GM12878 (cell line): ENCODE measurements at regions of chr17 and their contacts with region 1.

Region 1: GRCh38 chr17:32783602-32784001 is 93.3 kb downstream of the MYO1D start:
- DNase-seq: peak; percentile 32
- ATAC-seq: peak; percentile 82
- H3K4me3 ChIP-seq: no peak overlapping the region
- H3K27ac ChIP-seq: no peak overlapping the region
- H3K4me1 ChIP-seq: peaks cover 3% of the 10 kb centered on the region
- H3K27me3 ChIP-seq: no peaks in the 10 kb centered on the region
- CTCF ChIP-seq: peak; percentile 41 to 80 (median 60); a peak in 5 of 6 replicates
- EP300 ChIP-seq: no peak
- POLR2A ChIP-seq: no peak
- RAD21 ChIP-seq: peak; percentile 88

Region 2: DNA sequence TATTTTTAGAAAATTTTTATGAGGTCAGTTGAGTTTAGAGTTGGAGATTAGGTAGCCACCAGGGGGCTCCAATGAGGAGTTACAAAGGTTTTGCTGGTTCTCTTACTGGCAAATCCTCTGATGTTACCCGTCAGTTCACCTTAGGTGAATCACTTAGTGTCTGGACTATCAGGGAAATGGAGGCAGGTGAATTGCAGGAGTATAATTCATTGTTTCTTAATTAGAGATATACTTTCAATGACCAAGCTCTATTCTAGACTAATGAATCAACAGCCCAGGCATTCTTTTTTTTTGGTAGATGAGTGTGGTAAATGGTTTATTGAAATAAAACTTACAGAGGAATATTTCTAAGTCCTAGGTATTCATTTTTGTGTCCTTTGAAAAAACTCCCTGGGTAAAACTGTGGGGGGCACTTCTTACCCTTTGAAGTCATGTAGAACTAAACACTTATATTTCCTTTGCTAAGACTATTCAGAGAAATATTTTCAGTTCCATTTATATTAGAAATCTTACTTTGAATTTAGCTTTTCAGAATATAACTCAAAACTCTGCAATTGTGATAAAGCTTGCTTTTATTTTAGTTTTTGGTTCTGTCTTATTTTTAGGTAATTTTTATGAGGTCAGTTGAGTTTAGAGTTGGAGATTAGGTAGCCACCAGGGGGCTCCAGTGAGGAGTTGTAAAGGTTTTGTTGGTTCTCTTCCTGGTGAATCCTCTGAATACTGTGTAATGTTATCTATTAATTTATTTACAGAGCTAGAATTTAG is 321.6 kb before region 1 on chr17:
- CTCF ChIA-PET with region 1: interaction called, 10 read pairs
- POLR2A ChIA-PET with region 1: no interaction called
- RAD21 ChIA-PET with region 1: no interaction called
- SMC1A ChIA-PET with region 1: interaction called, 4 read pairs
- in situ Hi-C with region 1: no loop called
- intact Hi-C with region 1: no loop called
- DNase-seq: no peak
- ATAC-seq: peak; percentile 93
- H3K4me3 ChIP-seq: no peak overlapping the region
- H3K27ac ChIP-seq: no peak overlapping the region
- H3K4me1 ChIP-seq: no peaks in the 10 kb centered on the region
- H3K27me3 ChIP-seq: no peaks in the 10 kb centered on the region
- CTCF ChIP-seq: peak; percentile 35 to 64 (median 59); a peak in 5 of 6 replicates
- EP300 ChIP-seq: no peak
- POLR2A ChIP-seq: no peak
- RAD21 ChIP-seq: peak; percentile 42

Region 3: DNA sequence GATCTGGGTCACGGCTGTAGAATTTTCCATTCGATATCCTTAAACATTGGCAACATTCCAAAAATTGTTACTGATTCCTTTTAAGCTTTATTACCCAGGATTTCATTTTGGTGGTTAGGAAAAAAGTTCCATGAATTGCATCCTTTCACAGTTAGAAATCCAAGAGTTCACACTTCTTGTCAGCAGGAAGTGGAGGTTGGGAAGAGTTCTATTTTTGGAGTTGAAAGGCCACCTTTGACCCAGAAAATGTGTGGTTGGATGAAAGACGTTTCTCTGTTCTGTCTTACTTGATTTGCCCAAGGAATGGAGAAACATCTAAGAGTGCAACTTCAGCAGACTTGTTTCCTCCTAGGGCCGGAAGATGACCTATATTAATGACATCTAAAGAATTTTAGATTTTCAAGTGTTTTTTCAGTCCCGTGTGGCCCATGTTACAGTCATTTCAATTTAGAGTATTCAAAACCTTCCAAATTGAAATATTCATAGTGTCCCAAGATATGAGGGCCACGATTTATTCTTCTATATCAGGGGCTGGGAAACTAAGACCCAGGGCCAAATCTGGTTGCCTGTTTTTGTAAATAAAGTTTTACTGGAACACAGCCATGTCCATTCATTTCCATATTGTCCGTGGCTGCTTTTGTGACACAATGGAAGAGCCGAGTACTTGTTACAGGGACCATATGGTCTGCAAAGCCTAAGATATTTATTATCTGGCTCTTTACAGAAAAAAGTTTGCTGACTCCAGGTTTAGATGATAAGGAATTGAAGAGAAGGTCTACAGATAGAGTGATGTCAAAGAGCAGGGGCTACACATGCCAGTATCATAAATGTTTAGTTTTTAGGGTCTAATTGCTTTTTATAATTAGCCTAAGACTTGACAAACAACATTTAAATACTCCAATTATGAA is 246.6 kb before region 1 on chr17:
- CTCF ChIA-PET with region 1: no interaction called
- POLR2A ChIA-PET with region 1: no interaction called
- RAD21 ChIA-PET with region 1: no interaction called
- SMC1A ChIA-PET with region 1: no interaction called
- in situ Hi-C with region 1: no loop called
- intact Hi-C with region 1: no loop called
- DNase-seq: no peak
- ATAC-seq: no peak
- H3K4me3 ChIP-seq: no peak overlapping the region
- H3K27ac ChIP-seq: no peak overlapping the region
- H3K4me1 ChIP-seq: no peaks in the 10 kb centered on the region
- H3K27me3 ChIP-seq: no peaks in the 10 kb centered on the region
- CTCF ChIP-seq: no peak
- EP300 ChIP-seq: no peak
- POLR2A ChIP-seq: no peak
- RAD21 ChIP-seq: no peak

Region 4: DNA sequence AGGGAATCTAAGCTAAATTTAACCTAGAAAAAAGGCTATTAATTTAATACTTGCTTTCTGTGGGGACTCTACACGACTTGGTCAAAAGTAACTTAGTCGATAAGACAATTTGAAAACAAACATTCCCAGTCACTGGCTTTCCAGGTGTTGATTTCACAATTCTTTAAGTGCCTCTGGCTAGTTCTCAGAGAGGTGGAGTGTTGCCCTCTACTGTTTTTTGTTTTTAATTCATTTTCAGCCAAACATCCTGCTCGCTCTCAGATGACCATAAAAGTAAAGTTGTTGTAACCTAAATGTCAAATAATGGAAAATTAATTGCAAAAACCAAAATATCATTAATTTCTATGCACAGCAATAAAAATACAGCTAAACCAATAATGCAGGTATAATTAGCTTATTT is 13.8 kb before region 1 on chr17:
- CTCF ChIA-PET with region 1: interaction called, 24 read pairs
- POLR2A ChIA-PET with region 1: interaction called, 3 read pairs
- RAD21 ChIA-PET with region 1: interaction called, 9 read pairs
- SMC1A ChIA-PET with region 1: interaction called, 12 read pairs
- in situ Hi-C with region 1: no loop called
- intact Hi-C with region 1: no loop called
- DNase-seq: no peak
- ATAC-seq: no peak
- H3K4me3 ChIP-seq: no peak overlapping the region
- H3K27ac ChIP-seq: no peak overlapping the region
- H3K4me1 ChIP-seq: no peaks in the 10 kb centered on the region
- H3K27me3 ChIP-seq: no peaks in the 10 kb centered on the region
- CTCF ChIP-seq: 0 out of 6 replicates have a peak, but pooled peaks of 1 of the 3 experiments have one; percentile 12
- EP300 ChIP-seq: no peak
- POLR2A ChIP-seq: no peak
- RAD21 ChIP-seq: 0 out of 2 replicates have a peak, but pooled peaks have one; percentile 5

Region 5: DNA sequence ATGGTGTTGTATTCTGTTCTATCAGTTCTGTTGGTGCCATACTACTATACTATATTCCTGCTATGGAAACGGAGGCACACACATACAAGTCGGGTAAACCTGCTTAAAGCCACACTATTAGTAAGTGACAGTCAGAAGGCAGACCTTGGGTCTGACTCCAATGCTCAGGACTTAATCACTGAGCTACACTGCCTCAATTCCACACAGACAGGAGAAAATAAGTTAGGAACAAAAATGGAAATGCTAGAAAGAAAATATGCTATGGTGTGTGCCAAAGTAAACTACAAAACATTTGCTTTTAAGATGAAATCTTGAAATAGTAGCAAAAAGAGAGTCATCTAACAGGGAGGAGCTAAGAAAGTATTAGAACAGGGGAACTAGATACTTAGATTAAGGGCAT is 45.2 kb after region 1 on chr17:
- CTCF ChIA-PET with region 1: interaction called, 15 read pairs
- POLR2A ChIA-PET with region 1: interaction called, 9 read pairs
- RAD21 ChIA-PET with region 1: interaction called, 5 read pairs
- SMC1A ChIA-PET with region 1: interaction called, 17 read pairs
- in situ Hi-C with region 1: no loop called
- intact Hi-C with region 1: loop called (anchors 5 kb)
- DNase-seq: no peak
- ATAC-seq: peak; percentile 16
- H3K4me3 ChIP-seq: peak overlapping the region; percentile 35
- H3K27ac ChIP-seq: peak overlapping the region; percentile 88
- H3K4me1 ChIP-seq: peaks cover 48% of the 10 kb centered on the region
- H3K27me3 ChIP-seq: no peaks in the 10 kb centered on the region
- CTCF ChIP-seq: no peak
- EP300 ChIP-seq: no peak
- POLR2A ChIP-seq: no peak
- RAD21 ChIP-seq: no peak

Region 6: DNA sequence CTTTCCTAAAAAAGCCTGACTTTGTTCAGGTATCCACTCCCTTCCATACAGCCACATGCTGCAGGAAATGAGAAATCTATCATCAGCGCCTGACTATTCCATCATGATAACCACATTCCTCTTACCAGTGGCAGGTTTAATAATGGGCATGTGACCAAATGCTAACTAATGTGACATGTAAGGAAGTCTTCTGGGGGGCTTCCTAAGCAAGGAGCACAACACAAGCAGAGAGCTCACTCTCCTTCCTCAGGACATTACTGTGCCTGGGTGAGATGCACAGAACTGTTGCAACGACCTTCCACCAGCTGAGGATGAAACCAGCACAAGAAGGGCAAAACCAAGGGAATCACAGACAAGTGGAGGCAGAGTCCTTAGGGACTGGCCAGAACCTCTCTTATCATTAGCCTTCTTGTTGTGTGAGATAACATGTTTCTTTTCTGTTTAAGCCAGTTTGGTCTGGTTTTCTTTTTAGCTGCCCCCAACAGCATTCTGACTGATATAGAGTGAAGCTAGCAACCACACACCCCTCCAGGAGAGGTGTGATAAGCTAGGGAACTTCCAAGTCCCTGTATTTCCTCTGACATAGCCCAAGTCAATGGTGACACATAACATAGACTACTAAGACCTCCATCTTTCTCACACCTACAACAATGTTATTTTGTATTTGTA is 76.4 kb after region 1 on chr17:
- CTCF ChIA-PET with region 1: interaction called, 11 read pairs
- POLR2A ChIA-PET with region 1: no interaction called
- RAD21 ChIA-PET with region 1: interaction called, 8 read pairs
- SMC1A ChIA-PET with region 1: interaction called, 17 read pairs
- in situ Hi-C with region 1: no loop called
- intact Hi-C with region 1: no loop called
- DNase-seq: no peak
- ATAC-seq: peak; percentile 97
- H3K4me3 ChIP-seq: no peak overlapping the region
- H3K27ac ChIP-seq: no peak overlapping the region
- H3K4me1 ChIP-seq: peaks cover 6% of the 10 kb centered on the region; the same call in 1 of the 2 replicates
- H3K27me3 ChIP-seq: no peaks in the 10 kb centered on the region
- CTCF ChIP-seq: no peak
- EP300 ChIP-seq: no peak
- POLR2A ChIP-seq: no peak
- RAD21 ChIP-seq: no peak

Region 7: DNA sequence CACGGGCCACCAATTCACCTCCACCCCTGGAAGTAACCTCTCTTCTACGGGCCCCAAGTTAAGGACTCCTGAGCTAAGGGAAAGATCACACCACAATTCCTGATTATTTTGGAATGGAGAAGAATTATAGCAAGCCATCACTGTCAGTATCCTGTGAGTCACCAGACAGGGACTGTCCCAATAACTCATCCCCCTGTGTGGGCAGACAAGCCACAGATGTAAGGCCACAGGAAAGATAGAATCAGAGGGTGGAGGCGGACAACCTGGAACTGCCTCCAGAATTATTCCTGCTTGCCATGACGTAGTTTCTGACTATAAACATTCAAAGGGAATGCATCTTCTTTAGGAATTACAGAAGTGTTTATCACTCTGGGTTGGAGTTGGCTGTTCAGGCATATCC is 99.1 kb after region 1 on chr17:
- CTCF ChIA-PET with region 1: interaction called, 335 read pairs
- POLR2A ChIA-PET with region 1: interaction called, 29 read pairs
- RAD21 ChIA-PET with region 1: interaction called, 183 read pairs
- SMC1A ChIA-PET with region 1: interaction called, 248 read pairs
- in situ Hi-C with region 1: loop called (anchors 5 kb)
- intact Hi-C with region 1: loop called (anchors 1 kb)
- DNase-seq: no peak
- ATAC-seq: peak; percentile 72
- H3K4me3 ChIP-seq: no peak overlapping the region
- H3K27ac ChIP-seq: no peak overlapping the region
- H3K4me1 ChIP-seq: no peaks in the 10 kb centered on the region
- H3K27me3 ChIP-seq: no peaks in the 10 kb centered on the region
- CTCF ChIP-seq: no peak
- EP300 ChIP-seq: no peak
- POLR2A ChIP-seq: no peak
- RAD21 ChIP-seq: no peak

Region 8: DNA sequence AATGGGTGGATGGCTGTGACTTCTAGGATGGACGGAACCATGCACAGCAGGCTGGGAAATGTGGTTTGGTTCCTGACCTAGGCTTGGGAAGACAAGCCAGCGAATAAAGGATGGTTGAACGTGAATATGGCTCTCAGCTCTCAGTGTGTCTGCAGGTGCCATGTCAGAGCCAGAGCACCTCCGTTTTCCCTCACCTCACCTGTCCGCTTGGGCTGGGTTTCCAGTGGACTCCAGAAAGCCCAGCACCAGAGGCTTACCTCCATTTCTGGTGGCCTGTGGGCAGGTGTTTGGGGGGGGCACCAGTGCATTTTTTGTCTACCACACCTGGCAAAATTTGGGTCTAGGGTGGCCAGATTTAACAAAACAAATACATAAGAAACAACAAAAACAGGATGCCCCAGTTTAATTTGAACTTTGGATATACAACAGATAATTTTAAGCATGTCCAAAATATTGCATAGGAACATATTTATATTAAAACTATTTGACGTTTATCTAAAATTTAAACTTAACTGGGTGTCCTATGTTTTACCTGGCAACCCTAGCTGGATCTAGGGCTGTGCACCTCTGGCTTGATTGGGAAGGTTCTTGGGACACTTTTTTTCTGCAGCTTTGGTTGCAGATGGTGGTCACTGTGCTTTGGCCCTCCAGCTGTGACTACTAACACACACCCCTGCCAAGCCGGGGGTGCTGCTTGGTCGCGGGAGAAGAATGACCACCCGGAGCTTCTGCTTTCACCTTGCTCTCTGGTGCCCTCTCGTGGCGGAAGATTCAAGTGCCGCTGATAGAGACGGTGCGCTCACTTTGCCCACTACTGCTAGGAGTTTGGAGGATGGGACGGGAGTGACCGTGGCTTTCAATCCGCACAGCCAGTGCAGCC is 214.4 kb after region 1 on chr17:
- CTCF ChIA-PET with region 1: interaction called, 9 read pairs
- POLR2A ChIA-PET with region 1: no interaction called
- RAD21 ChIA-PET with region 1: interaction called, 4 read pairs
- SMC1A ChIA-PET with region 1: interaction called, 3 read pairs
- in situ Hi-C with region 1: no loop called
- intact Hi-C with region 1: loop called (anchors 5 kb)
- DNase-seq: no peak
- ATAC-seq: peak; percentile 92
- H3K4me3 ChIP-seq: no peak overlapping the region
- H3K27ac ChIP-seq: no peak overlapping the region
- H3K4me1 ChIP-seq: peaks cover 13% of the 10 kb centered on the region
- H3K27me3 ChIP-seq: no peaks in the 10 kb centered on the region; a peak in 1 of 4 replicates
- CTCF ChIP-seq: peak; percentile 78 to 91 (median 84)
- EP300 ChIP-seq: no peak
- POLR2A ChIP-seq: no peak
- RAD21 ChIP-seq: peak; percentile 66